ENCODE measurements at regions of chr6 and their contacts with region 1.

Region 1: GRCh38 chr6:14876778-14877613 is 368.9 kb upstream of the JARID2 start:
- DNase-seq: peak; percentile 81
- H3K4me3 Mint-ChIP-seq: peak overlapping the region; percentile 79
- H3K27ac Mint-ChIP-seq: peak overlapping the region; percentile 97
- H3K4me1 Mint-ChIP-seq: peaks cover 68% of the 10 kb centered on the region
- H3K27me3 Mint-ChIP-seq: no peaks in the 10 kb centered on the region

Region 2: DNA sequence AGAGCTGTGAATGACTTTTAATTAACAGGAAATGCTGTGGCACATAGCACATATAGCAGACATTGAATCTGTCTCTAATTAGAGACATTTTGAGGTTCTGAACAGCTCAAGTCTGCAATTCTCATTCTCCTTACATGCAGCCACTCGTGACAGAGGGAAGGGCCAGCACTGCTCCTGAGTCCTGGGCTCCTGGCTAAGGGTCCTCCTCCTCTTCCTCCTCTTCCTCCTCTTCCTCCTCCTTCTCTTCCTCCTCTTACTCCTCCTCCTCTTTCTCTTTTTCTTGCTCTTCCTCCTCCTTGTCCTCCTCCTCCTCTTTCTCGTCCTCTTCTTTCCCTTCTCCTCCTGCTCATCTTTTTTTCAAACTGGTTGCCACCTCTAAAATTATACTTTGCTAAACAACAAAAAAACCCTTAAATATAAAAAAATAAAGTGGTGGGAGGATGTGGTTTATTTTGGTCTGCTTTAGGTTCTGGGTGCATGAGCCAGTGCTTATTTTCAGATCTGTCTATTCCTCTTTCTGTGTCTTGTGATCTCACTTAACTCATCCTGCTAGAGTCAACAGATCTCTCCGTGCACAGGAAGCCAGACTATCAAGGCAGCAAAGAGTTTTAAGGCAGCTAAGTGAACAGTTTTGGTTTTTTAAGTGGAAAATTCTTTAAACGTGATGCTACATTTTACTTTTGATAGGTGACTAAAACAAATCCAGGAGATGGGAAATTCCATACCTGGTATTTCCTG is 600.2 kb before region 1 on chr6:
- intact Hi-C with region 1: loop called (anchors 10 kb)
- DNase-seq: peak; percentile 84
- H3K4me3 Mint-ChIP-seq: peak overlapping the region; percentile 71
- H3K27ac Mint-ChIP-seq: peak overlapping the region; percentile 92
- H3K4me1 Mint-ChIP-seq: peaks cover 46% of the 10 kb centered on the region
- H3K27me3 Mint-ChIP-seq: no peaks in the 10 kb centered on the region

Region 3: GRCh38 chr6:14660806-14661579 is 216.0 kb before region 1 on chr6:
- intact Hi-C with region 1: loop called (anchors 2 kb)
- DNase-seq: peak; percentile 91
- H3K4me3 Mint-ChIP-seq: no peak overlapping the region
- H3K27ac Mint-ChIP-seq: no peak overlapping the region
- H3K4me1 Mint-ChIP-seq: peaks cover 46% of the 10 kb centered on the region
- H3K27me3 Mint-ChIP-seq: peaks cover 7% of the 10 kb centered on the region

Region 4: GRCh38 chr6:14816116-14816859 is 60.7 kb before region 1 on chr6:
- intact Hi-C with region 1: loop called (anchors 1 kb)
- DNase-seq: no peak
- H3K4me3 Mint-ChIP-seq: no peak overlapping the region
- H3K27ac Mint-ChIP-seq: no peak overlapping the region
- H3K4me1 Mint-ChIP-seq: peaks cover 26% of the 10 kb centered on the region
- H3K27me3 Mint-ChIP-seq: no peaks in the 10 kb centered on the region

Region 5: GRCh38 chr6:15184441-15184861 is 307.5 kb after region 1 on chr6:
- intact Hi-C with region 1: loop called (anchors 1 kb)
- DNase-seq: peak; percentile 72
- H3K4me3 Mint-ChIP-seq: peak overlapping the region; percentile 10
- H3K27ac Mint-ChIP-seq: peak overlapping the region; percentile 92
- H3K4me1 Mint-ChIP-seq: peaks cover 16% of the 10 kb centered on the region
- H3K27me3 Mint-ChIP-seq: no peaks in the 10 kb centered on the region

Region 6: GRCh38 chr6:15441215-15441868 is 564.3 kb after region 1 on chr6:
- intact Hi-C with region 1: loop called (anchors 5 kb)
- DNase-seq: peak; percentile 84
- H3K4me3 Mint-ChIP-seq: no peak overlapping the region
- H3K27ac Mint-ChIP-seq: no peak overlapping the region
- H3K4me1 Mint-ChIP-seq: peaks cover 70% of the 10 kb centered on the region
- H3K27me3 Mint-ChIP-seq: no peaks in the 10 kb centered on the region

Measured in activated CD4-positive, alpha-beta T cell treated with anti-CD3 and anti-CD28 coated beads, Interleukin-2, amount 10 ng/mL, durations not matched to agents 24 days and 14 days (primary cell).